Endothelial cell of umbilical vein (primary cell): ENCODE measurements at regions of chr3 and their contacts with region 1.

Region 1: DNA sequence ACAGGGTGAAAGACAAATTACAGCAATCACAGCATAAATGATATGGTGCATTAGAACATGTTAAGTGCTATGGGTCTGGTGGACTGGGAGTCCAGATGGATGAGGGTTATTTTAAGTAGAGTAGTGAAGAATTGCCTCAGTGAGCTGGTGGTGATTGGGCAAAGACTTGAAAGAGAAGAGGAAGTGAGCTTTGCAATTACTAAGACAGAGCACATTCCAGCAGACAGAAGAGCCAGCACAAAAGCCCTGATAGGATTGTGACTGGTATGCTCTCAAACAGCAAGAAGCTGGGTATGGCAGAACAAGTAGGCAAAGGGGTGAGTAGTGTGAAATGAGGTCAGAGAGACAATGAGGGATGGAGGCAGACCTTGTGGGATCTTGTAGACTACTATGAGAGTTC is 2.1 kb upstream of the ACKR4 start:
- DNase-seq: peak; percentile 65
- H3K4me3 ChIP-seq: no peak overlapping the region
- H3K27ac ChIP-seq: peak overlapping the region; percentile 90
- H3K4me1 ChIP-seq: peaks cover 40% of the 10 kb centered on the region
- H3K27me3 ChIP-seq: no peaks in the 10 kb centered on the region
- CTCF ChIP-seq: no peak
- POLR2A ChIP-seq: no peak

Region 2: GRCh38 chr3:132047209-132047608 is 547.8 kb before region 1 on chr3:
- CTCF ChIA-PET with region 1: no interaction called
- POLR2A ChIA-PET with region 1: no interaction called
- dilution Hi-C with region 1: no loop called
- intact Hi-C with region 1: no loop called
- DNase-seq: no peak
- H3K4me3 ChIP-seq: no peak overlapping the region
- H3K27ac ChIP-seq: no peak overlapping the region
- H3K4me1 ChIP-seq: no peaks in the 10 kb centered on the region
- H3K27me3 ChIP-seq: no peaks in the 10 kb centered on the region
- CTCF ChIP-seq: no peak
- POLR2A ChIP-seq: no peak

Region 3: DNA sequence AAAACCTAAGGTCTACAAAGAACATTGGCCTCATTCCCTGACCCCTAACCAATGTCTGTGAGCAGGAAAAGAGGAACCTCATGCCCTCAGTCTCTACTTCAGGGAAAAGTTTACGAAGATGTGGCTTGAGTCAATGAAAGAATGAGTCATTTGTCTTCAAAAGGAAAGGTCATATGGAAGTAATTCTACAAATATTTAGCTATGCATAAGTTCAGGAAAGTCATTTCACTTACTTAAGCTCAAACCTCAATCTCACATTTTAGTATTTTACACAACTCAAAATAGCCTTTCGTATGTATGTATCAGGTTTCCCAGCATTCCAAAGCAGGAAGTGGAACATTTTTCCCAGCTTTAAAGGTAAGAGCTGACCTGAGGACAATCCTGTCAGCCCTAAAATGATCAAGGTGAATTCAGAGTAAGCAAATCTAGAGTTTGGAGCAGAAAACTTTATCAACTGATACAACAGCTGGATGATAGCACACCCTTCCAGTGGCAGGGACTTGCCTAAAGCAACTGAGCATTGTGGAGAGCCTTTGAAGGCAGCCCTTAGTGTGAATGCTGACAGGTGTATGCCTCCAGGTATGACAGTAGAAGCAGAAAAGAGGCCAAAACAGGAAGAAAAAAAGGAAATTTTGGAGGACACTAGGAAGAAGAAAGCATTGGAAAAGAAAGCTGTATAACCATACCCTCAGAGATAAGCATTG is 51.8 kb before region 1 on chr3:
- CTCF ChIA-PET with region 1: interaction called, 3 read pairs
- POLR2A ChIA-PET with region 1: no interaction called
- dilution Hi-C with region 1: no loop called
- intact Hi-C with region 1: loop called (anchors 2 kb)
- DNase-seq: peak; percentile 89
- H3K4me3 ChIP-seq: no peak overlapping the region
- H3K27ac ChIP-seq: peak overlapping the region; percentile 32
- H3K4me1 ChIP-seq: peaks cover 18% of the 10 kb centered on the region
- H3K27me3 ChIP-seq: no peaks in the 10 kb centered on the region
- CTCF ChIP-seq: no peak
- POLR2A ChIP-seq: no peak

Region 4: GRCh38 chr3:132622761-132623160 is 27.7 kb after region 1 on chr3:
- CTCF ChIA-PET with region 1: interaction called, 9 read pairs
- POLR2A ChIA-PET with region 1: no interaction called
- dilution Hi-C with region 1: no loop called
- intact Hi-C with region 1: loop called (anchors 1 kb)
- DNase-seq: peak; percentile 56
- H3K4me3 ChIP-seq: peak overlapping the region in 1 of 3 experiments; percentile 36
- H3K27ac ChIP-seq: peak overlapping the region; percentile 85
- H3K4me1 ChIP-seq: peaks cover 33% of the 10 kb centered on the region
- H3K27me3 ChIP-seq: no peaks in the 10 kb centered on the region
- CTCF ChIP-seq: no peak
- POLR2A ChIP-seq: no peak